CD4-positive, alpha-beta T cell (primary cell): ENCODE measurements at regions of chr17 and their contacts with region 1.

Region 1: DNA sequence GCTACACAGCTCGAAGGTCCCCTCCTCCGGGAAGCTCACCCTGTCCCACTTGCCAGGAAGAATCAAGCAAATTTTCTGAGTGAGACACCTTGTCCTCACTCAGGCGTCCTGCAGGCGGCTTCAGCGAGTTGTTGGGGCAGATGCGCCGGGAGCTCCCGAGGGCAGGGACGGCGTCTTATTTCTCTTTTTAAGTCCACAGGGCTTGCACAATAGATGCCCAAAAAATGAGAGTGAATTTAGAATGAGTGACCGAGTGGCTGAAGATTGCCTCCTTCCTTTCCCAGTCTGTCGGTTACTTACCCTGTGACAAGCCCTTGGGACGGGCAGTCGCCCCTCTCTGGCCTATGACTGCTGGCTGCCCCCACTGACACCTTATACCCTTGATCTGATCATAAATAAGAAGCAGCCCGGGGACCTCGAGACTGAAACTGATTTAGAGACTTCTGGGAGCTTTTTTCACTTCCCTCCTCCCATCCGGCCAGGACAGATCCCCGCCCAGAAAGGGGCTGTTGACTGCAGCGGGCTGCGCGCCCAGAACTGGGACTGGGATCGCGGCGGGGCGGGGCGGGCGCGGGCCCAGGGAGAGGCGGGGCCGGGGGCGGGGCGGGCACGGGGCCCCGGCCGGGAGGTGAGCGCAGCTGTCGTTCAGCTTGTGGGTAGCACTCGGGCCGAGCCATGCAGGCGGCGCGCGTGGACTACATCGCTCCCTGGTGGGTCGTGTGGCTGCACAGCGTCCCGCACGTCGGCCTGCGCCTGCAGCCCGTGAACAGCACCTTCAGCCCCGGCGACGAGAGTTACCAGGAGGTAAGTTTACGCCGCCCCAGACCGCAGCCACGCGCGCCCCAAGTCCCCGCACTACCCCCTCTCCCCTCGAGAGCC is at the start of gene TTYH2:
- DNase-seq: peak; percentile 45 to 88 (median 65)
- ATAC-seq: peak; percentile 69
- H3K4me3 ChIP-seq: peak within 1 kb of the TSS; percentile 64
- H3K4me3 Mint-ChIP-seq: peak within 1 kb of the TSS; percentile 89
- H3K27ac ChIP-seq: peak within 1 kb of the TSS; percentile 30 to 42
- H3K27ac Mint-ChIP-seq: peak within 1 kb of the TSS; percentile 74
- H3K4me1 ChIP-seq: peaks cover 69% of the 10 kb centered on the region
- H3K4me1 Mint-ChIP-seq: peaks cover 49% of the 10 kb centered on the region
- H3K27me3 ChIP-seq: no peaks in the 10 kb centered on the region
- H3K27me3 Mint-ChIP-seq: no peaks in the 10 kb centered on the region
- CTCF ChIP-seq: peak; percentile 37
- total RNA-seq, gene TTYH2: 4.4 to 5.4 TPM

Region 2: DNA sequence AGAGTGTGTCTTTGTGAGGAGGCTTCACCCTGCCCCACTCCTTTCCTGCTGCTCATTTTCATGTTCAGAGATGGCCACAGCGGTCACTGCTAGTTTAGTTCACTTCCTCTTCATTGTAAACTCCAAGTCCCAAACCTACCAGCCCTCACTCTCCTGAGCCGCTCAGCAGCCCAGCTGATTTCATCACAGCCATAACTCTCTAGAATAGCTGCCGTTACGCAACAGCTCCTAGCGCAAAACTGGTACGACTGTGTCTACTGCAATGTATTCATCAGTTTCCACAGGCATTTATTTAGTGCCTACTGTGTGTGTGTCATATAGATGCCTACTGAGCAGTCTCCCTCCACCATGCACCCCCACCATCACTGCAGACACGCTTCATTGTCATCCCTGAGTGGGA is 243.2 kb before region 1 on chr17:
- CTCF ChIA-PET with region 1: no interaction called
- POLR2A ChIA-PET with region 1: no interaction called
- intact Hi-C with region 1: no loop called
- DNase-seq: peak in 3 of 14 experiments; percentile 12 to 56 (median 43)
- ATAC-seq: no peak
- H3K4me3 ChIP-seq: no peak overlapping the region
- H3K4me3 Mint-ChIP-seq: no peak overlapping the region
- H3K27ac ChIP-seq: no peak overlapping the region
- H3K27ac Mint-ChIP-seq: no peak overlapping the region
- H3K4me1 ChIP-seq: no peaks in the 10 kb centered on the region
- H3K4me1 Mint-ChIP-seq: no peaks in the 10 kb centered on the region
- H3K27me3 ChIP-seq: peaks cover 0 to 7% of the 10 kb centered on the region in 2 experiments
- H3K27me3 Mint-ChIP-seq: peaks cover 32% of the 10 kb centered on the region
- CTCF ChIP-seq: no peak

Region 3: GRCh38 chr17:74280093-74280513 is 67.0 kb after region 1 on chr17:
- CTCF ChIA-PET with region 1: interaction called, 3 read pairs
- POLR2A ChIA-PET with region 1: interaction called, 28 read pairs
- intact Hi-C with region 1: loop called (anchors 5 kb)
- DNase-seq: peak; percentile 35 to 94 (median 54)
- ATAC-seq: peak; percentile 76
- H3K4me3 ChIP-seq: no peak overlapping the region
- H3K4me3 Mint-ChIP-seq: peak overlapping the region; percentile 12
- H3K27ac ChIP-seq: peak overlapping the region; percentile 57 to 90
- H3K27ac Mint-ChIP-seq: peak overlapping the region; percentile 90
- H3K4me1 ChIP-seq: peaks cover 73% of the 10 kb centered on the region
- H3K4me1 Mint-ChIP-seq: peaks cover 57% of the 10 kb centered on the region
- H3K27me3 ChIP-seq: no peaks in the 10 kb centered on the region
- H3K27me3 Mint-ChIP-seq: no peaks in the 10 kb centered on the region
- CTCF ChIP-seq: no peak

Region 4: GRCh38 chr17:74296548-74296936 is 83.4 kb after region 1 on chr17:
- CTCF ChIA-PET with region 1: interaction called, 5 read pairs
- POLR2A ChIA-PET with region 1: interaction called, 11 read pairs
- intact Hi-C with region 1: loop called (anchors 1 to 2 kb)
- DNase-seq: peak in 9 of 14 experiments; percentile 15 to 70 (median 32)
- ATAC-seq: no peak
- H3K4me3 ChIP-seq: no peak overlapping the region
- H3K4me3 Mint-ChIP-seq: no peak overlapping the region
- H3K27ac ChIP-seq: no peak overlapping the region
- H3K27ac Mint-ChIP-seq: no peak overlapping the region
- H3K4me1 ChIP-seq: peaks cover 19% of the 10 kb centered on the region
- H3K4me1 Mint-ChIP-seq: peaks cover 10% of the 10 kb centered on the region
- H3K27me3 ChIP-seq: no peaks in the 10 kb centered on the region
- H3K27me3 Mint-ChIP-seq: no peaks in the 10 kb centered on the region
- CTCF ChIP-seq: peak; percentile 50

Region 5: DNA sequence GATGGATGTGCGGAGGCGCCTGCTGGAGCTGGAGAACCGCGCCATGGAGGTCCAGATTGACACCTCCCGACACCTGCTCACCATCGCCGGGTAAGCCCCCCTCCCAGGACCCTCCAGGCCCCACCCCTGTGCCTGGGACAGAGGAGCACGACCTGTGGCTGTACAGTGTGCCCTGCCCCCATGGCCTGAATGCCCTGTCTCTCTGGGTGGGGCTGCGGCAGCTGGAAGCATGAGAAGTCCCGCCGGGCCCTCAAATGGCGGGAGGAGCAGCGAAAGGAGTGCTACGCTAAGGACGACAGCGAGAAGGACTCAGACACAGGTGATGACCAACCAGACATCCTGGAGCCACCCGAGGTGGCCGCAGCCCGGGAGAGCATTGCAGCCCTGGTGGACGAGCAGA is 137.3 kb after region 1 on chr17:
- CTCF ChIA-PET with region 1: no interaction called
- POLR2A ChIA-PET with region 1: no interaction called
- intact Hi-C with region 1: no loop called
- DNase-seq: no peak
- ATAC-seq: no peak
- H3K4me3 ChIP-seq: no peak overlapping the region
- H3K4me3 Mint-ChIP-seq: no peak overlapping the region
- H3K27ac ChIP-seq: no peak overlapping the region
- H3K27ac Mint-ChIP-seq: no peak overlapping the region
- H3K4me1 ChIP-seq: peaks cover 17% of the 10 kb centered on the region
- H3K4me1 Mint-ChIP-seq: no peaks in the 10 kb centered on the region
- H3K27me3 ChIP-seq: peaks cover 30 to 42% of the 10 kb centered on the region in 2 experiments
- H3K27me3 Mint-ChIP-seq: peaks cover 52% of the 10 kb centered on the region
- CTCF ChIP-seq: no peak

Region 6: GRCh38 chr17:74361230-74362068 is 148.3 kb after region 1 on chr17 and contains the start of gene BTBD17:
- CTCF ChIA-PET with region 1: no interaction called
- POLR2A ChIA-PET with region 1: interaction called, 3 read pairs
- intact Hi-C with region 1: loop called (anchors 2 to 5 kb)
- DNase-seq: peak in 11 of 14 experiments; percentile 18 to 60 (median 36)
- ATAC-seq: peak; percentile 46
- H3K4me3 ChIP-seq: no peak within 1 kb of the TSS
- H3K4me3 Mint-ChIP-seq: no peak within 1 kb of the TSS
- H3K27ac ChIP-seq: no peak within 1 kb of the TSS
- H3K27ac Mint-ChIP-seq: no peak within 1 kb of the TSS
- H3K4me1 ChIP-seq: peaks cover 14% of the 10 kb centered on the region
- H3K4me1 Mint-ChIP-seq: peaks cover 4% of the 10 kb centered on the region
- H3K27me3 ChIP-seq: peaks cover 36 to 37% of the 10 kb centered on the region in 2 experiments
- H3K27me3 Mint-ChIP-seq: peaks cover 31% of the 10 kb centered on the region
- CTCF ChIP-seq: peak; percentile 32
- total RNA-seq, gene BTBD17: not detected

Region 7: DNA sequence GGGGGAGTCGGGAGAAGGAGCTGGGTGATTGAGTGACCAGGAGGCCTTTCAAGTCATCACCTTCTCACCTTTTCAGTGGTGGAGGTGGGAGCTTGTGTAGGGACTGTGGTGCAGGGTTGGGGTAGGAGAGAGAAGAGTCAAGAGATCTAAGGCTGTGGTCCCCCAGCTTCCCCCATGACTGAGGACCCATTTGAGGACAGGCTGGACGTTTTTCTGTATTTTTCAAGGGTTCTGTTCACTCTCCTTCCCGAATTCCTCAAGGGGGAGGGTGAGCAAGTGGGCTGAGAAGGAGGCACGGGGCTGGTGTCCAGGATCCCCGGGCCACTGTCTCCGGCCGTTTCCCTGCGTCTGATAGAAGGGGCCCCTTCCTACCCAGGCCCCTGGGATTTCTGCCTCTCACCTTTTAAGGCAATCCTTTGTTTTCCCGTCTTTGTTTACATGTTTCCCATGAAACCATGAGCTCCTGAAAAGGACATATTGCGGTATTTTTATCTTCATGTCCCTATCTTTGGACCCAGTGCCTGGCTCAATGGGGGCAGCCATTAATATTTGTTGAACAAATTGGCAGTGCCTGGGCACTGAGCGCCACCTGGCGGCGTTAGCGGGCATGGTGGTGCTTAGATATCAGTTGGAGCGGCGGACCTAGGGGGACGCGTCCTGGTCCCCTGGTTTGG is 244.1 kb after region 1 on chr17:
- CTCF ChIA-PET with region 1: interaction called, 3 read pairs
- POLR2A ChIA-PET with region 1: no interaction called
- intact Hi-C with region 1: loop called in 1 of 2 experiments (anchors 2 kb)
- DNase-seq: peak; percentile 45 to 86 (median 67)
- ATAC-seq: peak; percentile 60
- H3K4me3 ChIP-seq: no peak overlapping the region
- H3K4me3 Mint-ChIP-seq: peak overlapping the region; percentile 51
- H3K27ac ChIP-seq: no peak overlapping the region
- H3K27ac Mint-ChIP-seq: no peak overlapping the region
- H3K4me1 ChIP-seq: peaks cover 68% of the 10 kb centered on the region
- H3K4me1 Mint-ChIP-seq: peaks cover 27% of the 10 kb centered on the region
- H3K27me3 ChIP-seq: peaks cover 0 to 3% of the 10 kb centered on the region in 2 experiments
- H3K27me3 Mint-ChIP-seq: peaks cover 6% of the 10 kb centered on the region
- CTCF ChIP-seq: peak; percentile 83

Region 8: GRCh38 chr17:74528491-74529199 is 315.5 kb after region 1 on chr17:
- CTCF ChIA-PET with region 1: no interaction called
- POLR2A ChIA-PET with region 1: no interaction called
- intact Hi-C with region 1: loop called in 1 of 2 experiments (anchors 1 kb)
- DNase-seq: peak in 3 of 14 experiments; percentile 32 to 76 (median 67)
- ATAC-seq: no peak
- H3K4me3 ChIP-seq: no peak overlapping the region
- H3K4me3 Mint-ChIP-seq: no peak overlapping the region
- H3K27ac ChIP-seq: no peak overlapping the region
- H3K27ac Mint-ChIP-seq: no peak overlapping the region
- H3K4me1 ChIP-seq: no peaks in the 10 kb centered on the region
- H3K4me1 Mint-ChIP-seq: peaks cover 5% of the 10 kb centered on the region
- H3K27me3 ChIP-seq: peaks cover 11 to 15% of the 10 kb centered on the region in 2 experiments
- H3K27me3 Mint-ChIP-seq: peaks cover 46% of the 10 kb centered on the region
- CTCF ChIP-seq: no peak